GM18951 (cell line): ENCODE measurements at regions of chr14 and their contacts with region 1.

Region 1: GRCh38 chr14:28751467-28752058 is 15.0 kb upstream of the FOXG1 start:
- POLR2A ChIP-seq: no peak

Region 2: DNA sequence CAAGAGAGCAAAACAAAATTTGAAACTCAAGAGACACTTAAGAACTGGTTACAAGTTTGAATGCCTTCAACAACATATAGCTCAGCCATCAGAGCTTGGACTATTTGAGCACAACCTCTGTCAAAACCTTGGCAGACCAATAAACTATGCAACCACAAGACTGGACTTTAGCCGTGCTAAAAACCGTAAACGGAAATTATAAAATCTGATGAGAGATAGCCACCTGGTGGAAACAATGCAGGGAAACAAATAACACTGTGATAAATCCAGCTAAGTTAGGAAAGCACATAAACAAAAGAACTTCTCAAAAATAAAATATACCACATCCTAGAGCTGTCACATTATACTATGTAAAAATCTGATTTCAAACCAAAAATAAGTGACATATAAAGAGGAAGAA is 1079.5 kb before region 1 on chr14:
- in situ Hi-C with region 1: no loop called
- POLR2A ChIP-seq: no peak

Region 3: GRCh38 chr14:28577711-28578131 is 173.8 kb before region 1 on chr14:
- in situ Hi-C with region 1: no loop called
- POLR2A ChIP-seq: no peak

Region 4: DNA sequence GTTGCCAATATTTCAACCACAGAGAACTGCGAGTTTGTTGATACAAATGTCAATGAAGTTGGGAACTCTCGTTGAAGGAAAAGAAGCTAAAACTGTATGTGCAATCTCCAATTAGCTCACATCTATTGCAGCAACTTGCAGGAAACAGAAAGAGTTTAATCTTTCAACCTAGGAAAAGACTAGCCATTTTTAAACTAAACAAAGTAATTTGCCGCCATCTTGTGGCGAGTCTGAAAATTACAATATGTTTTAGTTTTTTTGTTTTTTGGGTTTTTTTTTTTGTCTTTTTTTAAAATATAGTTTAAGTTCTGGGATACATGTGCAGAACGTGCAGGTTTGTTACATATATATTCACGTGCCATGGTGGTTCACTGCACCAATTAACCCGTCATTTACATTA is 116.2 kb before region 1 on chr14:
- in situ Hi-C with region 1: no loop called
- POLR2A ChIP-seq: no peak

Region 5: DNA sequence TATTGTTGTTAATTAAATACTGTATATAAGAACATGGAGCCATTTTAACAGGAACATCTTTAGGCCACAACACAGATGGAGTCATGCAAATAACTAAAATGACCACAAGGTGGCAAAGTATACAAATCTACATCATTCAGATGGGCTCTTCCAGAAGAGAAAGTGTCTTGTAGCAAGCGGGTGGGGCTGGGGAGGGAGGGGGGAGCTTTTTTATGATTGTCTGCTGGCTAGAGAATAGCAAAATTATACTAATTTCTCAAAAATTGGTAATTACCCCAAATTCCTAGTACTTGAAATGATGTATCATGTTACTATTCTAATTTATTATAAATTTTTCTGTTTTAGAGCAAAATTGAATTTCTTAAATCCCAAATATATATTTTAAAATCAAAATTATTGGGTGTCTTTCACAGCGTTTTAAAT is 797.4 kb after region 1 on chr14:
- in situ Hi-C with region 1: loop called (anchors 25 kb)
- POLR2A ChIP-seq: no peak

Region 6: DNA sequence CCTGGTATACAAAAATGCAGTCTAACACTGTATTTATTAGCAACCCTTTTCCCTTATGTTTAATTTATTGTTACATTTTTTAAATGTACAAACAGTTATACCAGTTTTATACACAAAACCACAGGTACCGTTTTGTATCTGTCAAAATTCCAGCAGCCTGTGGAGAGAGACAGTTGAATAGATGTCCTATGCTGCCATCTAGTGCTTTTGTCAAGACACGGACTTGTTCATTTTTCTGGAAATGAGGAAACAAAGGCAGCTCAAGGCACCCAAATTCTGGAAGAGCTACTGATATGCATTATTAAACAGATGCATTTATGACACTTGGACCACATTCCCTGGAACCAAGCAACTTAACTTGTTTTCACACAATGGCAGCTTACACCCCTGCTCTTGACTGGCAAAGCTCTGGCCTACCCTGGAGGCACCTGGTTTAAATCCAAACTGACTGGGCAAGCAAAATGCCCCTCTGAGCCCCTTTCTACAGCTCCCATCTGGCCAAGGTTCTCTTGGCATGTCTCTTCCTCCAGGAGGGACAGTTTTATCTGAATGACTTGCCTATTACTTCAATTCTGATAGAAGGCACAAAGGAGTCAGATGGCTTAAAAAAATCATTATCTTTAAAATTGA is 1463.0 kb after region 1 on chr14:
- in situ Hi-C with region 1: loop called (anchors 25 kb)
- POLR2A ChIP-seq: no peak